ENCODE measurements at regions of chr19 and their contacts with region 1.

Region 1: DNA sequence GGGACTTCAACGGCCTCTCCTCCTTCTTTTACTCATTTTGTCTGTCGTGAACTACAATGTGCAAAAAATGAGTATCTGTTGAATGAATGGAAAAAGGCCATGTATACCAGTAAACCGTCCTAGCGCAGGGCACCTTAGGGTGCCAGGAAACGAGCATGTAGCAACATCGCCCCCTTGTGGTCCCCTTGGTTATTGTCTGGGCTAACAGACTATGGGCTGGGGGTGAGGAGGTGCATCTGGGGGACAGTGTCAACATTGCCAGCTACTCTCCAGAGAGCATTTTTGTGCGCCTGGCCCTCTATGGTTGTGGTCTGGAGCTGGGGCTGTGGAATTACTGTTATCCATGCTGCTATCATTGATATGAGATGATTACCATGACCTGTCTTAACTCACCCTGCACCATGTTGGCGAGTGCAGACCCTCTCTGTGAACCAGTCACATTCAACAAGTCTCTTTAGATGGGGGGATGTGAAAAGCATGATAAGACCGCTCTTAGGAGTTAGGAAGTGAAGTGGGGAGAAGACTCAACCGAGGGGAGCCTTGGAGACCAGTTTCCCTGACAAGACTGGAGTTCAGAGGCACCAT is 22.8 kb upstream of the SIGLEC11 start:
- DNase-seq: peak in 1 of 2 donors; percentile 82
- ATAC-seq: peak; percentile 55

Region 2: DNA sequence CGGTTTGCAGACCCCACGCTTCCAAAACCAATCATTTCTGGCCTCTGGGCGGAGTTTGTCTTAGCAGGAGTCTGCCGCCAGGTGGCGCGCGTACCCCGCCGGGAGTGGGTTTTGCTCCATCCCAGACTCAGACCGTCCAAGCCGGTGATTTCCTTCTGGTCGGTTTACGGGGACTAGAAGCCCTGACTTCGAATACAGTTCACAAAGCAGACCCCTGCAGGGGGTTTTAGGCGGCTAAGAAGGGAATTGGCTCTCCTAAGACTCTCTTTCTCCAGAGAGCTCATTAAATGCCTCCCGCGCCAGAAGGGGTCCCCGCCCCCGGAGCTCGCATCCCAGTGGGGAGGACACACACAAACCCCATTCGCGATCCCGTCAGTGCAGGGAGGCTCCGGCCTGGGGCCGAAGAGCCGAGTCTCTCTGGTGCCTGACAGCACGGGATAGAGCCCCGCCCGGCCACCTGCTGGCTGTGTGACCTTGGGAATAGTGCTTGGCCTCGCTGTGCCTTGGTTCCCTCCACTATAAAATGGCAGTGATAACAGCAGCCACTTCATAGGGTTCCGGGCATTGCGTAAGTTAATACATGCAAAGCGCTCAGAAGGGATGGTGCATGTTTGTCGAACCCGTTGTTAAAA is 45.9 kb before region 1 on chr19:
- intact Hi-C with region 1: loop called in 1 of 2 experiments (anchors 5 kb)
- DNase-seq: peak in 1 of 2 donors; percentile 81
- ATAC-seq: peak; percentile 89

Region 3: DNA sequence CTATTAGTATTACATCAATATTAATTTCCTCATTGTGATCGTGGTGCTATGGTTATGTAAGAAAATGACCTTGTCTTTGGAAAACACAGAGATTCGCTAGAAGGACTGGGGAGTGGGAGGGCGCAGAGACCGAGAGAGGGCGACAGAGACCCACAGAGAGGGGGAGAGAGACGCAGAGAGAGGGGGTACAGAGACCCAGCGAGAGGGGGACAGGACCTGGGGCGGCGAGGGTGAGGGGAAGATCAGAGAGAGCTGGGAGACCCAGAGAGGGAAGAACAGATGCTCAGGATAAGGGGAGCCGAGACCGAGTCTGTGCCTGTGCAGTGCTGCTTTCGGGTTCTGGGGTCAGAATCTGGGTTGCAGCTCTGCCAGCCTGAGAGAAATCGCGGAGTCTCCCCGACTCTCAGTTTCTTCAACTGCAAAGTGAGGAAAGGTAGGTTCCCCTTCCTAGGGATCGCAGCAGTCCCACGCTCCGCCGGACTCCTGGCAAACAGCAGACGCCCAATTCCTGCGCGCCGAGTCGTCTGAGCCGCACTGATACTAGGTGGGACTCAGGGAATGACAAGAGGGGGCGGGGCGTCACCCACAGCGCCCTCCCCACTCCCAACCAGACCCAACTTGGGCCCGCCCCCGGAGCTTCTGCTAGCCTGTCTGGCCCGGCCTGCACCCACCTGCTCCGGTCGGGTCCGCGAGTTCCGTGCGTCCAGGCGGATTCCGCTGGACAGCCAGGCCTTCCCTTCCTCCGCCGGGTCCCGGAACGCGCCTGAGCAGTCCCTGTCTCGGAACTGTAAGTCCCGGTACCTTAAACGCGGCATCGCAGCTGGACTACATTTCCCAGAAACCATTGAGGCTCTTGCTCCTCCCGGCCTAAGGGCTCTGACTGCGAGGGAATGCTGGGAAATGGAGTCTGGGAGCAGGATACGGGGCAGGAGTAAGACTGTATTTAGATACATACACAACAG is 164.0 kb after region 1 on chr19:
- intact Hi-C with region 1: no loop called
- DNase-seq: peak; percentile 82 to 88
- ATAC-seq: peak; percentile 94